ENCODE measurements at regions of chr4 and their contacts with region 1.

Region 1: GRCh38 chr4:15238720-15239119 is 189.1 kb upstream of the C1QTNF7 start:
- DNase-seq: no peak
- H3K4me3 ChIP-seq: no peak overlapping the region
- H3K27ac ChIP-seq: no peak overlapping the region
- H3K4me1 ChIP-seq: no peaks in the 10 kb centered on the region
- H3K27me3 ChIP-seq: no peaks in the 10 kb centered on the region
- CTCF ChIP-seq: peak in 3 of 4 experiments; percentile 37 to 50 (median 44)
- POLR2A ChIP-seq: no peak

Region 2: GRCh38 chr4:15327311-15328298 is 88.9 kb after region 1 on chr4:
- intact Hi-C with region 1: loop called (anchors 5 kb)
- DNase-seq: no peak
- H3K4me3 ChIP-seq: no peak overlapping the region
- H3K27ac ChIP-seq: no peak overlapping the region
- H3K4me1 ChIP-seq: no peaks in the 10 kb centered on the region
- H3K27me3 ChIP-seq: no peaks in the 10 kb centered on the region
- CTCF ChIP-seq: no peak
- POLR2A ChIP-seq: no peak

Region 3: DNA sequence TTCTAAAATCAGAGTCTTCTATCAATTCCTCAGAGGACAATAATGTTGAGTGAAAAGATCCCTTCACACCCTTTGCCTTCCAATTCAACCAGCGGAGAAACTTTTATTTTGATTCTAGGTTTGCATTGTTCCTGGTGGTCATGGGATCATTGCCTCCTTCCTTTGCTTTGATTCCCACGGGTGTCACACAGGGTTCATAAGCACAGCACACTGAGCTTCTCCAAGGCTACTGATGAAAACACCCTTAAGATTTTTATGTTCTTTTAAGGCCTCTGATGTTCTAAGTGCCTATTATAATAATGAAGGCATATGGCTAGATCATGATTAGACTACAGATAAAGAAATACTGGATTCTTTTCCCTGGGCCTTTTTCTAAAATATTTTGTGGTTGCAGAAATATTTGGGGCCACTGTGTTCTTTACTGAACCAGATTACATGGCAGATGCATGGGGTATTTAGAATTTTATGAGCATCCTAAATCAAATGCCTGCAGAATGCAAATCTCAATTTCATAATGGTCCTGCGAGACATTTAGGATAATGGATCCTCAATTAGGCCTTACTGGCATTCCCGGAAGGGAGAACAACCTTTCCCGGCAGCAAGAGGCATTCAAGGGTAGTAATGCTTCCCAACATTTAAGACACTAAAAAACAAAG is 768.2 kb after region 1 on chr4:
- intact Hi-C with region 1: no loop called
- DNase-seq: no peak
- H3K4me3 ChIP-seq: no peak overlapping the region
- H3K27ac ChIP-seq: no peak overlapping the region
- H3K4me1 ChIP-seq: no peaks in the 10 kb centered on the region
- H3K27me3 ChIP-seq: no peaks in the 10 kb centered on the region
- CTCF ChIP-seq: no peak
- POLR2A ChIP-seq: no peak